Activated T-helper 1 cell treated with anti-CD3 and anti-CD28 coated beads, Interleukin-12 subunit alpha, Interleukin-12 subunit beta, Interleukin-2, Interleukin-4 antibody, amounts not matched to agents 30 ng/mL and 10 ng/mL and 1 ng/mL, durations not matched to agents 14 hours and 24 hours and 36 hours (primary cell): ENCODE measurements at regions of chr17 and their contacts with region 1.

Region 1: DNA sequence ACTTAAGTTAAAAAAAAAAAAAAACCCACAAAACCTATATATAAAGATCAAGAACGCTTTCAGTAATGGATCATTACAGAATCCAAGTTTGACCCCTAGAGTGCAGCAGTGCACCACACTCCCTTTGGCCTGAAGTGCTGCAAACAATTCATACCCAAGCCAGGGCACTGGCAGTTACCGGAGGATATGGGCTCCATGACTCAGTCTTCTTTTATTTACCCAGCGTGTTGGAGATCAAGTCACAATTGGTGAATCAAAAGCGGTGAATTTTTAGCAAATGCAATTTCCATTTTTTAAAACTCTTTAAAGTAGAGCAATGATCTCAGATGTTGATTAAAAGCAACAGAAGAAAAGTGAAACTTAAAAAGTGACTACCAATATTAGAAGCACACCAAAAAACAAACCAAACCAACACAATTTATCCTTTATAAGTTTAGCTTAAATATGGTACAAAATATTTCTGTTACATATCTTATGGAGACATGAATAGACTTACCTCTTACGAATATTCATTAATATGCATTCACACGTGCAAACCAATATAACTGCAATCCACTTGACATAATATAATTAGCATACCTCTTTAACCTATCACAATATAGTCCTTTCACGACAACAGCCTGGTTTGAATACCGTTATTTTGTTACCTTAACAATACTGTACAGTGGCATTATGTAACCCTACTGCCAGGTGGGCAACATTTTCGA is 46.3 kb downstream of the ZNF652 start:
- DNase-seq: peak; percentile 63
- H3K4me3 Mint-ChIP-seq: peak overlapping the region; percentile 69
- H3K27ac Mint-ChIP-seq: peak overlapping the region; percentile 70
- H3K4me1 Mint-ChIP-seq: peaks cover 30% of the 10 kb centered on the region
- H3K27me3 Mint-ChIP-seq: no peaks in the 10 kb centered on the region

Region 2: GRCh38 chr17:49292901-49293300 is 22.8 kb before region 1 on chr17:
- intact Hi-C with region 1: no loop called
- DNase-seq: no peak
- H3K4me3 Mint-ChIP-seq: no peak overlapping the region
- H3K27ac Mint-ChIP-seq: no peak overlapping the region
- H3K4me1 Mint-ChIP-seq: no peaks in the 10 kb centered on the region
- H3K27me3 Mint-ChIP-seq: no peaks in the 10 kb centered on the region

Region 3: DNA sequence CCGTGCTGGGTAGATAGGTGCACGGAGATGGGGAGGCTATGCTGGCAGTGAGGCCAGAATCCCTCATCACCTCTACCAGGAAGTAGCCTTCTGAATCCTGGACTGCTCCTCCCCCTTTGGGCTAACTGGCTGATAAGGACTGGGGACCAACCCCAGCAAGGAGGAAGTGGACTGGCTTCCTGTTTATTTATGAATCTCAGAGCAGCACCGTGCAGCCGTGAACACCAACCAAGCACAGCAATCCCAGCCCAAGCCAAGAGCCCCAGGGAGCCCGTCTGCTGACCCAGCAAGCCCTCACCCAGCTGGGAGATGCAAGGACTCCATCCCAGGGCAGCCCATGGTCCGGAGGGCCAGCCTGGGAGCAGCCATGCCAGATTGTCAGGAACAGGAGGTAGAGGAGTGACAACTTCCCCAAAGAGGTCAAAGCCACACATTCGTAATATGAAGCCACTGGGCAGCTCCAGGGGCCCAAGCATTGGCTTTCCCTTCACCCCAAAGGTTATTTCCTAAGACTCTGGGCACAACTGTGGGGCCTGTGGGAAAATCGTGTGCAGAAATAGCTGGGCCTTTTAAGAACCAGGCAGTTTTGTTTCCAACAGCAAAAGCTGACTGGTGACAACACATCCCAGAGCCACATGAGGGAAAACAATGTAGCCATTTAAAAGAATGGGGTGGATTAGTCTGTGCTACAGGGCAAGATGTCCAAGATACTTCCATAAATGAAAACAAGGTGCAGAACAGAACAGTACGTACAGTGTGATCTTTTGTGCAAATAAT is 75.0 kb after region 1 on chr17:
- intact Hi-C with region 1: loop called (anchors 1 kb)
- DNase-seq: no peak
- H3K4me3 Mint-ChIP-seq: no peak overlapping the region
- H3K27ac Mint-ChIP-seq: peak overlapping the region; percentile 83
- H3K4me1 Mint-ChIP-seq: peaks cover 71% of the 10 kb centered on the region
- H3K27me3 Mint-ChIP-seq: no peaks in the 10 kb centered on the region